Activated CD4-positive, alpha-beta T cell treated with anti-CD3 and anti-CD28 coated beads, Interleukin-2, amount 10 ng/mL, durations not matched to agents 24 days and 14 days (primary cell): ENCODE measurements at regions of chr11 and their contacts with region 1.

Region 1: DNA sequence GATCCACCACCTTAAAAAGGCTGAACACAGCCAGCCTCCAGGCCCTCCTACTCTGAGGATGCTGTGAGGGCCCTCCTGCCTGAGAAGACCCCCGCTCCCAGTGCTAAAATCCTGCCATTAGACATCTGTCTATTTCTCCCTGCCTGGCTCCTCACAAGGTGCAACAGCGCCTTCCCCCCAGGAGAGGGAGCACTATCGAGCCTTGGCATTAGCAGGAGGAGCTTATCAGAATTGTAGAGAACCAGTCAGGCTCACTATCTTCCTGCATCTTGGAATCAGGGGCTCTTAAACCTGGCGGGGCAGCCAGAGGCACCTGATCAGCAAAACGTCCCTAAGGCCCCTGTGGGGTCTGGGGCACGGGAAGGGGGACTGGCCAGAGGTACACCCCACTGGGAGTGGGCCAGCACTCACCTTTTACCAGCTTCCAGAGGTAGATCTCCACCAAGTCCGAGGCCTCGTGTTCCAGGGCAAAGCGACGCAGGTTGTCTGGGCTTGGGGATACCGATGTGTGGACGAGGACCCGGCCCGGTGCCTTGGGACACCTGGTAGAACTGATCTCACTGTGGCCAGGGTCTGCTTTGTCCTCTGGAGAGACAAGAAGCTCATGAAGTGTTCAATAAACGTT is 28.7 kb downstream of the CHRDL2 start:
- DNase-seq: peak; percentile 87
- H3K4me3 Mint-ChIP-seq: no peak overlapping the region
- H3K27ac Mint-ChIP-seq: no peak overlapping the region
- H3K4me1 Mint-ChIP-seq: peaks cover 3% of the 10 kb centered on the region
- H3K27me3 Mint-ChIP-seq: no peaks in the 10 kb centered on the region

Region 2: GRCh38 chr11:74398244-74399159 is 304.0 kb before region 1 on chr11 and contains the start of gene PGM2L1:
- intact Hi-C with region 1: no loop called
- DNase-seq: peak; percentile 97
- H3K4me3 Mint-ChIP-seq: peak within 1 kb of the TSS; percentile 97
- H3K27ac Mint-ChIP-seq: peak within 1 kb of the TSS; percentile 100
- H3K4me1 Mint-ChIP-seq: peaks cover 24% of the 10 kb centered on the region
- H3K27me3 Mint-ChIP-seq: no peaks in the 10 kb centered on the region
- total RNA-seq, gene PGM2L1: 4.7 and 4.9 TPM in 2 replicates

Region 3: DNA sequence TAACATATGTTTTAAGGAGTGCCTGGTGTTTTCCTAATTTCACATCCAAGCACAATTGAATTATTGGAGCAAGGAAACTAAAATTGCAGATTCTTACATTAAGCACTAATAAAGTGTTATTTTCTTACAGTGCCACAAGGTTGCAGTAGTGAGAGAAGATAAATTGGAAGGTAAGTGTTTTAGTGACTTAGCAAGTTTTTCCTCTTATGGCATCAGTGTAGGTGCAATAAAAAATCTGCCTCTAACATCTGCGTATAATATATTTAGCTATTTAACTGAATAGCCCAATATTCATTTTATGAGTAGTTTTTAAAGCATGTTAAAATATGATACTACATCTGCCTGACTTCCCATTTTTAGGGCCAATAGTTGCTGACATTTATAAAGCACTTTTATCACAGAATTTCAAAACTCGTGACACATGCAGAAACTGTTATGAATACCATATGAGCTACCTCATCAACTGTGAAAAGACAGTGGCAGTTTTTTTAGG is 91.1 kb before region 1 on chr11:
- intact Hi-C with region 1: no loop called
- DNase-seq: no peak
- H3K4me3 Mint-ChIP-seq: no peak overlapping the region
- H3K27ac Mint-ChIP-seq: no peak overlapping the region
- H3K4me1 Mint-ChIP-seq: peaks cover 2% of the 10 kb centered on the region
- H3K27me3 Mint-ChIP-seq: no peaks in the 10 kb centered on the region

Region 4: GRCh38 chr11:74726547-74727182 is 24.2 kb after region 1 on chr11:
- intact Hi-C with region 1: loop called (anchors 1 kb)
- DNase-seq: peak; percentile 85
- H3K4me3 Mint-ChIP-seq: no peak overlapping the region
- H3K27ac Mint-ChIP-seq: no peak overlapping the region
- H3K4me1 Mint-ChIP-seq: no peaks in the 10 kb centered on the region
- H3K27me3 Mint-ChIP-seq: peaks cover 56% of the 10 kb centered on the region

Region 5: GRCh38 chr11:74870485-74870884 is 168.0 kb after region 1 on chr11:
- intact Hi-C with region 1: loop called (anchors 1 kb)
- DNase-seq: peak; percentile 63
- H3K4me3 Mint-ChIP-seq: no peak overlapping the region
- H3K27ac Mint-ChIP-seq: no peak overlapping the region
- H3K4me1 Mint-ChIP-seq: no peaks in the 10 kb centered on the region
- H3K27me3 Mint-ChIP-seq: no peaks in the 10 kb centered on the region

Region 6: GRCh38 chr11:74937696-74938475 is 235.4 kb after region 1 on chr11:
- intact Hi-C with region 1: no loop called
- DNase-seq: no peak
- H3K4me3 Mint-ChIP-seq: no peak overlapping the region
- H3K27ac Mint-ChIP-seq: no peak overlapping the region
- H3K4me1 Mint-ChIP-seq: peaks cover 13% of the 10 kb centered on the region
- H3K27me3 Mint-ChIP-seq: no peaks in the 10 kb centered on the region

Region 7: GRCh38 chr11:75132080-75132479 is 429.6 kb after region 1 on chr11:
- intact Hi-C with region 1: no loop called
- DNase-seq: no peak
- H3K4me3 Mint-ChIP-seq: no peak overlapping the region
- H3K27ac Mint-ChIP-seq: peak overlapping the region; percentile 6
- H3K4me1 Mint-ChIP-seq: no peaks in the 10 kb centered on the region
- H3K27me3 Mint-ChIP-seq: peaks cover 32% of the 10 kb centered on the region